Psoas muscle (tissue), 8 donors: ENCODE measurements at regions of chr10 and their contacts with region 1.

Region 1: GRCh38 chr10:94362360-94363250 is at the start of gene NOC3L:
- DNase-seq: peak; percentile 96 to 98
- ATAC-seq: peak; percentile 100
- H3K4me3 ChIP-seq: peak within 1 kb of the TSS; percentile 87
- H3K27ac ChIP-seq: peak within 1 kb of the TSS; percentile 90
- H3K4me1 ChIP-seq: peaks cover 17% of the 10 kb centered on the region
- H3K27me3 ChIP-seq: no peaks in the 10 kb centered on the region
- CTCF ChIP-seq: peak; percentile 91
- total RNA-seq, gene NOC3L: 13.6 to 18.7 (median 17.1) TPM

Region 2: GRCh38 chr10:93482145-93482834 is 880.3 kb before region 1 on chr10 and contains the start of gene MYOF:
- intact Hi-C with region 1: no loop called
- DNase-seq: peak; percentile 46 to 62
- ATAC-seq: peak; percentile 87 to 96 (median 90)
- H3K4me3 ChIP-seq: peak within 1 kb of the TSS; percentile 67
- H3K27ac ChIP-seq: peak within 1 kb of the TSS; percentile 50
- H3K4me1 ChIP-seq: no peaks in the 10 kb centered on the region
- H3K27me3 ChIP-seq: peaks cover 0 to 5% (median 0%) of the 10 kb centered on the region in 3 donors
- CTCF ChIP-seq: peak; percentile 58
- total RNA-seq, gene MYOF: 4.2 to 9.4 (median 5.8) TPM

Region 3: DNA sequence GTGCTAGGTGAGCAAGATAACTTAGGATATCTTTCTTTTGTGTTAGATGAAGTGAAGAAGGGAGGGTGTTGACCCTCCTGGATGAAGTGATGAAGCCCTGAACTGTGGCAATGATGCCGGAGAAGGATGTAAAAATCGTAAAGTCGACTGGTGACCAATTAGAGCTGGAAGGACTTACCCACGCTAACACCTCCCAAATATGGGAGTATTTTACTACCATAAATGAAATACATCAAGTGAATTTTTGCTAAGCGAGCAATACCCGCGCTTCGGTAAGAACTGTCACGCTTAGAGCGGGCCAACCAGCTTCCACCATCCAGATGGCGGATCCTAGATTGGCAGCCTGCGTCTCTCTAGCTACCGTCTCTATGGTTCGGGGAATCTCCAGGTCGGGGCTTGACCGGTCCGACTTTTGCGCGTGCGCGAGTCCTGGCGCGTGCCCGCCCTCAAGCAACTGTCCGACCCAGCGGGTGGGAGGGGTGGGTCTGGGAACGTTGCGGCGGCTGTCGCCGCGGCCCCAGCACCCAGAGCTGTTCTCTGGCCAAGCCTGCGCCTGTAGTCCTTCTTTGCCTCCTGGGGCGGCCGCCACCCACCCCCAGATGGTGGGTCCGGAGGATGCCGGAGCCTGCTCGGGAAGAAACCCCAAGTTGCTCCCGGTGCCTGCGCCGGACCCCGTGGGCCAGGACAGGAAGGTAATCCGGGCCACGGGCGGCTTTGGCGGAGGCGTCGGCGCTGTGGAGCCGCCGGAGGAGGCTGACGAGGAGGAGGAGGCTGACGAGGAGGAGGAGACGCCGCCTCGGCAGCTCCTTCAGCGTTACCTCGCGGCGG is 39.6 kb after region 1 on chr10 and contains the start of gene TBC1D12:
- intact Hi-C with region 1: loop called (anchors 2 to 5 kb)
- DNase-seq: peak; percentile 96 to 98
- ATAC-seq: peak; percentile 97 to 98 (median 98)
- H3K4me3 ChIP-seq: peak within 1 kb of the TSS; percentile 99
- H3K27ac ChIP-seq: peak within 1 kb of the TSS; percentile 97
- H3K4me1 ChIP-seq: peaks cover 12% of the 10 kb centered on the region
- H3K27me3 ChIP-seq: peaks cover 0 to 6% (median 0%) of the 10 kb centered on the region in 3 donors
- CTCF ChIP-seq: no peak
- total RNA-seq, gene TBC1D12: 5.0 to 5.4 (median 5.2) TPM